Lower lobe of right lung (tissue), 2 donors: ENCODE measurements at regions of chr10 and their contacts with region 1.

Region 1: GRCh38 chr10:22003079-22003913 is at the start of gene DNAJC1:
- DNase-seq: peak; percentile 98
- ATAC-seq: peak; percentile 99
- H3K4me3 ChIP-seq: peak within 1 kb of the TSS; percentile 80
- H3K27ac ChIP-seq: peak within 1 kb of the TSS; percentile 97
- H3K4me1 ChIP-seq: peaks cover 14% of the 10 kb centered on the region
- H3K27me3 ChIP-seq: no peaks in the 10 kb centered on the region
- CTCF ChIP-seq: no peak
- total RNA-seq, gene DNAJC1: 32.5 TPM

Region 2: DNA sequence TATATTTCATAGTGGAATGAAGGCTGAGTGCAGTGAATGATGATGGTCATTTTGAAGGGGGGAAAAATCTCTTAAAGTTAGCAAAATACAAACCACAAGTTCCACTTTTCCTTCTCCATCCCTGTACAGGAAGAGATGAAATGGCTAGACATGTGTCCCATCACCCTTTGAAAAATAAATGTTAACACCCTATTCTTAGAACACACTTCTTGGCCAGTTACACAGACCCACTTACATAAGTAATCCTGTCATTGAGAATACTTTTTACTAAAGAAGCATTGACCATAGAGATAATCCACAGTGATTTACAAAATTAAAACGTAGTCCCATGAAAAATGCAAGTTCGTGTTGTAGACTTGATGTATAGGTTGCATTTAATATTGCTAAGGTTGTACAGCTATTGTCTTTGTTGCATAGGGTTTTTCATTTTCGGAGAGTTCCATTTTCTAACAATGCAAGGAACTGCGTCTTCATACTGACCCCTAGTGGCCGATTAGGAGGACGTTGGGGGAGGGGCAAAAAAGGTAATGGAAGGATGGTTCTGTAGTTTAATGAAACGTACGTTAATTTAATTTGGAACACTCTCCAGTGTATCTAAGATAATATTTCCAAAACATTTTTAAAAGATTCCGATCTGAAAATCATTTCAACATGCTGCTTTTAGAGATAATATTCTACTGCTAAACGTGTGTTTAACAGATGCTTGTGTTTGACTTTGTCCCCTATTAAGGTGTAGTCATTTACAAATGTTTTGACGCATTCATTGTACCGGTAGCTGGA is 985.5 kb after region 1 on chr10:
- intact Hi-C with region 1: loop called (anchors 10 kb)
- DNase-seq: no peak
- ATAC-seq: peak; percentile 76 to 84
- H3K4me3 ChIP-seq: no peak overlapping the region
- H3K27ac ChIP-seq: no peak overlapping the region
- H3K4me1 ChIP-seq: peaks cover 6% of the 10 kb centered on the region
- H3K27me3 ChIP-seq: peaks cover 3% of the 10 kb centered on the region
- CTCF ChIP-seq: peak; percentile 91